IMR-90 (cell line): ENCODE measurements at regions of chr2 and their contacts with region 1.

Region 1: GRCh38 chr2:219402665-219403515 is 15.2 kb upstream of the DNPEP start:
- DNase-seq: peak; percentile 88
- ATAC-seq: peak; percentile 78
- H3K4me3 ChIP-seq: no peak overlapping the region
- H3K27ac ChIP-seq: no peak overlapping the region
- H3K4me1 ChIP-seq: peaks cover 20% of the 10 kb centered on the region
- H3K27me3 ChIP-seq: no peaks in the 10 kb centered on the region; the same call in 1 of the 2 replicates
- CTCF ChIP-seq: peak; percentile 98
- POLR2A ChIP-seq: 0 out of 2 replicates have a peak, but pooled peaks have one; percentile 33
- RAD21 ChIP-seq: peak; percentile 98

Region 2: GRCh38 chr2:219049282-219049681 is 353.6 kb before region 1 on chr2:
- CTCF ChIA-PET with region 1: no interaction called
- POLR2A ChIA-PET with region 1: no interaction called
- dilution Hi-C with region 1: no loop called
- in situ Hi-C with region 1: no loop called
- intact Hi-C with region 1: no loop called
- DNase-seq: no peak
- ATAC-seq: no peak
- H3K4me3 ChIP-seq: no peak overlapping the region
- H3K27ac ChIP-seq: no peak overlapping the region
- H3K4me1 ChIP-seq: no peaks in the 10 kb centered on the region
- H3K27me3 ChIP-seq: peaks cover 32% of the 10 kb centered on the region
- CTCF ChIP-seq: no peak
- POLR2A ChIP-seq: no peak
- RAD21 ChIP-seq: no peak

Region 3: GRCh38 chr2:219218732-219219701 is 183.9 kb before region 1 on chr2 and contains the start of gene ABCB6:
- CTCF ChIA-PET with region 1: no interaction called
- POLR2A ChIA-PET with region 1: no interaction called
- dilution Hi-C with region 1: no loop called
- in situ Hi-C with region 1: no loop called
- intact Hi-C with region 1: no loop called
- DNase-seq: peak; percentile 90
- ATAC-seq: peak; percentile 89
- H3K4me3 ChIP-seq: peak within 1 kb of the TSS; percentile 54
- H3K27ac ChIP-seq: peak within 1 kb of the TSS; percentile 92
- H3K4me1 ChIP-seq: peaks cover 5% of the 10 kb centered on the region; the same call in 1 of the 2 replicates
- H3K27me3 ChIP-seq: no peaks in the 10 kb centered on the region
- CTCF ChIP-seq: no peak
- POLR2A ChIP-seq: no peak; the same call in 1 of the 2 replicates
- RAD21 ChIP-seq: no peak
- total RNA-seq, gene ABCB6: 10.8 and 12.5 TPM in 2 replicates

Region 4: DNA sequence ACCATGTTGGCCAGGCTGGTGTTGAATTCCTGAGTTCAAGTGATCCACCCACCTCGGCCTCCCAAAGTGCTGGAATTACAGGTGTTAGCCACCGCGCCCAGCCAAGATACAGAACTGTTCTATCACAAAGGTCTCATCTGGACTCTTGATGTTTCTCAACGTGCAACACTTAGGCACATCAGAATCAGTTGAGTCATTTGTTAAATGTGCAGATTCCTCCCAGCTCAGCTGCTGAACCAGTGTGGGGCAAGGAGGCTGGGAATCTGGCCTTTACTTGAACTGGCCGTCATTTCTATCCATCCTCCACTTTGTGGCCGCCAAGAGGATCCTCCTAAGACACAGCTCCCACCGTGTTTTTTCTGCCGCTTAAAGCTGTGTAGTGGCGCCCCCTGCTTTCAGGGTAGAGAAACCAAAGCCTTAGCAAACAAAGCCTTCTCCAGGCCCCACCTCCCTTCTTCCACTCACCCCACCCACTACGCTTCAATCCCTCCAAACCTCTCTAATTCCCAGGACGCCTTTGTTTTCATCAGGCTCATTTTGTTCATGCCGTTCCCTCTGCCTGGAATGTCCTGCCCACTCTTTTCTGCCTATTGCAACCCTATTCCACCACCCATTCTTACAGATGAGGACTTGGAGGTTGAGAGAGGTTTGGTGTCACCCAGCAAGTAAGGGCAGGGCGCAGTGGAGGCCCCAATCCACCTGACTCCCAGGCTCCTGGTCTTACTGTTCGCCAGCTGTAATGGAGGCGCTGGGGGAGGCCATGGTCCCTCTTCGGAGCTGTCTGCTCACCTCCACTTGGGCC is 31.0 kb after region 1 on chr2:
- CTCF ChIA-PET with region 1: interaction called, 6 read pairs
- POLR2A ChIA-PET with region 1: no interaction called
- dilution Hi-C with region 1: no loop called
- in situ Hi-C with region 1: no loop called
- intact Hi-C with region 1: loop called (anchors 1 kb)
- DNase-seq: peak; percentile 71
- ATAC-seq: peak; percentile 56
- H3K4me3 ChIP-seq: no peak overlapping the region
- H3K27ac ChIP-seq: no peak overlapping the region
- H3K4me1 ChIP-seq: peaks cover 8% of the 10 kb centered on the region
- H3K27me3 ChIP-seq: no peaks in the 10 kb centered on the region; the same call in 1 of the 2 replicates
- CTCF ChIP-seq: peak; percentile 60
- POLR2A ChIP-seq: no peak
- RAD21 ChIP-seq: peak; percentile 52

Region 5: GRCh38 chr2:219452838-219453317 is 50.0 kb after region 1 on chr2:
- CTCF ChIA-PET with region 1: interaction called, 3 read pairs
- POLR2A ChIA-PET with region 1: no interaction called
- dilution Hi-C with region 1: no loop called
- in situ Hi-C with region 1: no loop called
- intact Hi-C with region 1: loop called (anchors 2 kb)
- DNase-seq: peak; percentile 95
- ATAC-seq: peak; percentile 84
- H3K4me3 ChIP-seq: no peak overlapping the region
- H3K27ac ChIP-seq: peak overlapping the region; percentile 96
- H3K4me1 ChIP-seq: peaks cover 28% of the 10 kb centered on the region
- H3K27me3 ChIP-seq: no peaks in the 10 kb centered on the region
- CTCF ChIP-seq: no peak
- POLR2A ChIP-seq: no peak
- RAD21 ChIP-seq: no peak

Region 6: GRCh38 chr2:219459460-219460311 is 56.8 kb after region 1 on chr2:
- CTCF ChIA-PET with region 1: interaction called, 7 read pairs
- POLR2A ChIA-PET with region 1: no interaction called
- dilution Hi-C with region 1: no loop called
- in situ Hi-C with region 1: loop called (anchors 5 kb)
- intact Hi-C with region 1: loop called (anchors 1 kb)
- DNase-seq: peak; percentile 63
- ATAC-seq: peak; percentile 72
- H3K4me3 ChIP-seq: no peak overlapping the region
- H3K27ac ChIP-seq: peak overlapping the region; percentile 90
- H3K4me1 ChIP-seq: peaks cover 24% of the 10 kb centered on the region
- H3K27me3 ChIP-seq: no peaks in the 10 kb centered on the region
- CTCF ChIP-seq: peak; percentile 78
- POLR2A ChIP-seq: no peak
- RAD21 ChIP-seq: peak; percentile 72

Region 7: GRCh38 chr2:219521066-219521880 is 118.4 kb after region 1 on chr2:
- CTCF ChIA-PET with region 1: interaction called, 16 read pairs
- POLR2A ChIA-PET with region 1: no interaction called
- dilution Hi-C with region 1: no loop called
- in situ Hi-C with region 1: no loop called
- intact Hi-C with region 1: loop called (anchors 1 kb)
- DNase-seq: peak; percentile 37
- ATAC-seq: peak; percentile 78
- H3K4me3 ChIP-seq: no peak overlapping the region
- H3K27ac ChIP-seq: peak overlapping the region; percentile 26
- H3K4me1 ChIP-seq: peaks cover 16% of the 10 kb centered on the region
- H3K27me3 ChIP-seq: peaks cover 33% of the 10 kb centered on the region
- CTCF ChIP-seq: peak; percentile 70
- POLR2A ChIP-seq: no peak
- RAD21 ChIP-seq: peak; percentile 58

Region 8: GRCh38 chr2:219530048-219530963 is 127.4 kb after region 1 on chr2:
- CTCF ChIA-PET with region 1: interaction called, 36 read pairs
- POLR2A ChIA-PET with region 1: no interaction called
- dilution Hi-C with region 1: no loop called
- in situ Hi-C with region 1: loop called (anchors 5 kb)
- intact Hi-C with region 1: loop called (anchors 1 kb)
- DNase-seq: peak; percentile 78
- ATAC-seq: peak; percentile 97
- H3K4me3 ChIP-seq: peak overlapping the region; percentile 22; the same call in 1 of the 2 replicates
- H3K27ac ChIP-seq: no peak overlapping the region
- H3K4me1 ChIP-seq: no peaks in the 10 kb centered on the region
- H3K27me3 ChIP-seq: peaks cover 58% of the 10 kb centered on the region
- CTCF ChIP-seq: peak; percentile 99
- POLR2A ChIP-seq: peak; percentile 62
- RAD21 ChIP-seq: peak; percentile 99

Region 9: DNA sequence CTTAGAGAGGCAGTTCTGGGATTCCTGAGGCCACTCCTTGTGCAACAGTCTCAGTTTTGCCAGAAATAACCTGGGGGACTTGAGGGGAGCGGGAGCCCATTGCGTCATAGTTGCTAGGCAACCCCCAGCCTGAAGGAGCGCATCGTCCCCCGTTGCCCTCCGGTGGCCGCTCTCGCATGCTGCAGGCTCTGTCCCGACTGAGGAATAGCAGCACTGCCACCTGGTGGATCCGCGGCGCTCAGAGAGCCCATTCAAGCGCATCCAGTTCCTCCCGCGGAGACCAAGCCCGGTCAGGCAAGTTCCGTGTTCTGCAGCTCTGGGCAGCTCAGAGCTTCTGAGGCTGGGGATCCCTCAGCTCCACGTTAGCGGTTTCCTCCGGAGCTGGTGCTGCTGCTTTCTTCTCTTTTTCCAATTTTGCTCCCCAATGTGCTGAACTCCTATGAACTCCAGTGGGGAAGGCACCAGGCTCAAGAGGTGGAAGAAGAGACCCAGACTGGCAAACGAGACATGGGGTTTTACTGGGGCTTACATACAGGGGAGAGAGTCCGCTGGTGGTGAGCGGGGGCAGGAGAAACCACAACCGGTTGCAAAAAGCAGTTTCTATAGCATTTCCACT is 239.7 kb after region 1 on chr2:
- CTCF ChIA-PET with region 1: no interaction called
- POLR2A ChIA-PET with region 1: no interaction called
- dilution Hi-C with region 1: no loop called
- in situ Hi-C with region 1: no loop called
- intact Hi-C with region 1: loop called (anchors 1 kb)
- DNase-seq: peak; percentile 94
- ATAC-seq: peak; percentile 97
- H3K4me3 ChIP-seq: no peak overlapping the region
- H3K27ac ChIP-seq: no peak overlapping the region
- H3K4me1 ChIP-seq: peaks cover 12% of the 10 kb centered on the region
- H3K27me3 ChIP-seq: no peaks in the 10 kb centered on the region
- CTCF ChIP-seq: peak; percentile 100; the same call in 1 of the 2 replicates
- POLR2A ChIP-seq: 0 out of 2 replicates have a peak, but pooled peaks have one; percentile 22
- RAD21 ChIP-seq: peak; percentile 96